CD4-positive, alpha-beta T cell (primary cell): ENCODE measurements at regions of chr3 and their contacts with region 1.

Region 1: GRCh38 chr3:82133070-82133606 is 371.7 kb upstream of the GBE1 start:
- DNase-seq: peak in 13 of 14 experiments; percentile 6 to 63 (median 12)
- ATAC-seq: peak; percentile 43
- H3K4me3 ChIP-seq: no peak overlapping the region
- H3K4me3 Mint-ChIP-seq: no peak overlapping the region
- H3K27ac ChIP-seq: no peak overlapping the region
- H3K27ac Mint-ChIP-seq: no peak overlapping the region
- H3K4me1 ChIP-seq: no peaks in the 10 kb centered on the region
- H3K4me1 Mint-ChIP-seq: no peaks in the 10 kb centered on the region
- H3K27me3 ChIP-seq: no peaks in the 10 kb centered on the region
- H3K27me3 Mint-ChIP-seq: peaks cover 5% of the 10 kb centered on the region
- CTCF ChIP-seq: peak; percentile 76

Region 2: DNA sequence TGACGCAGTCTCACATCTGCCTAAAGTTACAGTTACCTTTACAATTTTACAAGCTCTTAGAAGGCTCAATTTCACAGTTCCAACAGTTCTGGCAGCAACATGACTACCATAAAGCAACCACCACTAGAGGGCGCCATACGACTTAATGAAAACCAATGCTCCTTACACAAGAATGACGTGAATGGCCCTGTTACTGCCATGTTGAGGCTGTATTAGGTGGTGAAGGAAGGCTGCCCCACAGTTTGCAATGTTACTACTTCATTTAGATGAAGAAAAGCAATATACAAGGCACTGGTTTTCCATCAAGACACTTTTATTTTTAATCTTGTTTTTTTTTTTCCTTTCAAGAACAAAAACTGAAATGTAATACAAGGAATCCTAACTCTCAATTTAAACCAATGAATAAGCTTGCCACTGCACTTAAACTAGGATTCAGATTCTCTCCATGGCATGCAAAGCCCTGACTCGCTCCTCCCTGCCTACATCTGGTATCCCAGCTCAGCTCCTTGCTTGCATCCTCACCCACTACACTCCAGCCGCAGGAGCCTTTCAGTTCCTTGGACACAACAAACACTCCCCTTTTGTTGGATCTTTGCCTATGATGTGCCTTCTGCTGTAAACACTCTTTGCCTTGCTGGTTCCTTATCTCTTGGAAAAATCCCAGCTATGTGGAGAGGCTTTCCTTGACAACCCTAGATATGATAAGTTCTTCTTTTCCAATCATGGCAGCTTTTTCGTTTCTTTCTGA is 642.4 kb before region 1 on chr3:
- CTCF ChIA-PET with region 1: interaction called, 3 read pairs
- POLR2A ChIA-PET with region 1: no interaction called
- intact Hi-C with region 1: loop called in 1 of 2 experiments (anchors 2 kb)
- DNase-seq: peak; percentile 21 to 82 (median 61)
- ATAC-seq: peak; percentile 60
- H3K4me3 ChIP-seq: no peak overlapping the region
- H3K4me3 Mint-ChIP-seq: no peak overlapping the region
- H3K27ac ChIP-seq: no peak overlapping the region
- H3K27ac Mint-ChIP-seq: no peak overlapping the region
- H3K4me1 ChIP-seq: no peaks in the 10 kb centered on the region
- H3K4me1 Mint-ChIP-seq: no peaks in the 10 kb centered on the region
- H3K27me3 ChIP-seq: no peaks in the 10 kb centered on the region
- H3K27me3 Mint-ChIP-seq: no peaks in the 10 kb centered on the region
- CTCF ChIP-seq: peak; percentile 71

Region 3: DNA sequence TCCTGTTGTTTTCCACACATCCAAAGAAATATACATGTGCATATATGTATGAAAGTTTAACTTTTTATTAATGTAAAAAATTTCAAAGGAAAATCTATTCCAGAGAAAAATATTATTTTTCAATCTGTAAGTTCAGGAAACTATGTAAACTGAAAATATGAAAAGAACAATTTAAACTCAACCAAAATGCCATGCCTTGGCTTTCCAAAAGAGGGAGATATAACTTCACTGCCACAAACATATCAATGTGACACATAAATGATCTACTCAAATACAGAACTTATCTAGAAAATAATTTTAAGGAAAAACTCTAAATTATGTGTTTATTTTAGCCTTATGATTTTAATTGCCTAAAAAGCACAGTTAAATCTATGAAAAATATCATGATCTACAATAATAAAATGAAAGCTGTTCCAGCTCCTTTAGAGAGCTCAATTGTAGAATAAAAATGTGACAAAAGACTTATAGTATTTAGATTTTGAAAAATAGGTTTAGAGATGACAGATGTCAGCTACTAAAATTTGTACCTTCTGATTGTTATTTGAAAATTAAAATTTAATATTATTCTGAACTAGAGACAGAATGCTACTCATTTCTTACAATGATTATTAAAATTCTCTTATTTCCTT is 466.5 kb before region 1 on chr3:
- CTCF ChIA-PET with region 1: no interaction called
- POLR2A ChIA-PET with region 1: no interaction called
- intact Hi-C with region 1: loop called in 1 of 2 experiments (anchors 2 kb)
- DNase-seq: peak in 3 of 14 experiments; percentile 15 to 16 (median 16)
- ATAC-seq: no peak
- H3K4me3 ChIP-seq: no peak overlapping the region
- H3K4me3 Mint-ChIP-seq: no peak overlapping the region
- H3K27ac ChIP-seq: no peak overlapping the region
- H3K27ac Mint-ChIP-seq: no peak overlapping the region
- H3K4me1 ChIP-seq: no peaks in the 10 kb centered on the region
- H3K4me1 Mint-ChIP-seq: no peaks in the 10 kb centered on the region
- H3K27me3 ChIP-seq: no peaks in the 10 kb centered on the region
- H3K27me3 Mint-ChIP-seq: no peaks in the 10 kb centered on the region
- CTCF ChIP-seq: peak; percentile 65

Region 4: DNA sequence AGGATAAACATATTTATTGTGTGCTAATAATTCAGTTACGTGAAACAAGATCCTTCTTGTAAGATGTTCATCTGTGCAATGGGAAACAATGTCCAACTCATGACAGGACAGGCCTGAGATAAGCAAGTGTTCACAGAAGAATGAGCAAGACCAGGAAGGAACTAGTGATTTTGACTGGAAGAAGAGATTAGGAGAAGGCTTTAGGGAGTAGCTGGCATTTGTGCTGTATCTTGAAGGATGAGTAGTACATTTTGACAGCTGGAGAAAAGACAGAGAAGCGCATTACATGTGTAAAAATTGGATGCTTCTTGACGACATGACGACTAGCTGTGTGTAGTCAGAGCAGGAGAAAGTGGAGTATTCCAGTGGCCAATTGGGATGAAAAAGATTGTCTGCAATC is 420.1 kb before region 1 on chr3:
- CTCF ChIA-PET with region 1: no interaction called
- POLR2A ChIA-PET with region 1: no interaction called
- intact Hi-C with region 1: no loop called
- DNase-seq: no peak
- ATAC-seq: no peak
- H3K4me3 ChIP-seq: no peak overlapping the region
- H3K4me3 Mint-ChIP-seq: no peak overlapping the region
- H3K27ac ChIP-seq: no peak overlapping the region
- H3K27ac Mint-ChIP-seq: no peak overlapping the region
- H3K4me1 ChIP-seq: no peaks in the 10 kb centered on the region
- H3K4me1 Mint-ChIP-seq: no peaks in the 10 kb centered on the region
- H3K27me3 ChIP-seq: no peaks in the 10 kb centered on the region
- H3K27me3 Mint-ChIP-seq: no peaks in the 10 kb centered on the region
- CTCF ChIP-seq: no peak